ENCODE measurements at regions of chr12 and their contacts with region 1.

Region 1: GRCh38 chr12:31631784-31632183 is 27.7 kb upstream of the ETFBKMT start:
- DNase-seq: no peak
- H3K4me3 ChIP-seq: no peak overlapping the region
- H3K27ac ChIP-seq: no peak overlapping the region
- H3K4me1 ChIP-seq: no peaks in the 10 kb centered on the region
- H3K27me3 ChIP-seq: no peaks in the 10 kb centered on the region
- CTCF ChIP-seq: no peak

Region 2: GRCh38 chr12:31245822-31246469 is 385.8 kb before region 1 on chr12:
- CTCF ChIA-PET with region 1: no interaction called
- POLR2A ChIA-PET with region 1: no interaction called
- intact Hi-C with region 1: loop called (anchors 2 kb)
- DNase-seq: peak in 1 of 2 experiments; percentile 33
- H3K4me3 ChIP-seq: no peak overlapping the region
- H3K27ac ChIP-seq: no peak overlapping the region
- H3K4me1 ChIP-seq: no peaks in the 10 kb centered on the region
- H3K27me3 ChIP-seq: no peaks in the 10 kb centered on the region
- CTCF ChIP-seq: no peak